A673 (cell line): ENCODE measurements at regions of chr7 and their contacts with region 1.

Region 1: GRCh38 chr7:116258734-116259133 is 48.4 kb downstream of the TES start:
- DNase-seq: peak; percentile 86
- H3K4me3 ChIP-seq: no peak overlapping the region
- H3K27ac ChIP-seq: peak overlapping the region; percentile 79
- H3K4me1 ChIP-seq: peaks cover 36% of the 10 kb centered on the region
- H3K27me3 ChIP-seq: no peaks in the 10 kb centered on the region
- CTCF ChIP-seq: peak; percentile 87

Region 2: DNA sequence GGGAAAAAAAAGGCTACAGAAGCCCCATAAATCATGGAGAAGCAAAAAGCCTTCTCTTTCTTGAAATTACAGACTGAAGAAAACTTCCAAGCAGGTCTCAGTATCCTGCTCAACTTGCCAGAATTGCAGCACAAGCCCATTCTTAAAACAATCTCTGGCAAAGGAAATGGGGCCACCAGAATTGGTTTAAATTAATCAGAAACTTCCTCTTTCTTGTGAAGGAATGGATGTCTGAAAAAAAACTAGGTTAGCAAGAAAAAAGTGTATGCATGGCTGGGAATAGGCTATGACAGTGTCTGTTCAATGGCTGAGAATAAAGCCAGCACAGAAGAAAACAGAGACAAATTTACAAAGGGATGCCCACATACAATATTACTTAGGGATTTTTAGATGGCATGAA is 287.2 kb before region 1 on chr7:
- CTCF ChIA-PET with region 1: no interaction called
- POLR2A ChIA-PET with region 1: no interaction called
- intact Hi-C with region 1: no loop called
- DNase-seq: no peak
- H3K4me3 ChIP-seq: no peak overlapping the region
- H3K27ac ChIP-seq: no peak overlapping the region
- H3K4me1 ChIP-seq: no peaks in the 10 kb centered on the region
- H3K27me3 ChIP-seq: no peaks in the 10 kb centered on the region
- CTCF ChIP-seq: no peak

Region 3: DNA sequence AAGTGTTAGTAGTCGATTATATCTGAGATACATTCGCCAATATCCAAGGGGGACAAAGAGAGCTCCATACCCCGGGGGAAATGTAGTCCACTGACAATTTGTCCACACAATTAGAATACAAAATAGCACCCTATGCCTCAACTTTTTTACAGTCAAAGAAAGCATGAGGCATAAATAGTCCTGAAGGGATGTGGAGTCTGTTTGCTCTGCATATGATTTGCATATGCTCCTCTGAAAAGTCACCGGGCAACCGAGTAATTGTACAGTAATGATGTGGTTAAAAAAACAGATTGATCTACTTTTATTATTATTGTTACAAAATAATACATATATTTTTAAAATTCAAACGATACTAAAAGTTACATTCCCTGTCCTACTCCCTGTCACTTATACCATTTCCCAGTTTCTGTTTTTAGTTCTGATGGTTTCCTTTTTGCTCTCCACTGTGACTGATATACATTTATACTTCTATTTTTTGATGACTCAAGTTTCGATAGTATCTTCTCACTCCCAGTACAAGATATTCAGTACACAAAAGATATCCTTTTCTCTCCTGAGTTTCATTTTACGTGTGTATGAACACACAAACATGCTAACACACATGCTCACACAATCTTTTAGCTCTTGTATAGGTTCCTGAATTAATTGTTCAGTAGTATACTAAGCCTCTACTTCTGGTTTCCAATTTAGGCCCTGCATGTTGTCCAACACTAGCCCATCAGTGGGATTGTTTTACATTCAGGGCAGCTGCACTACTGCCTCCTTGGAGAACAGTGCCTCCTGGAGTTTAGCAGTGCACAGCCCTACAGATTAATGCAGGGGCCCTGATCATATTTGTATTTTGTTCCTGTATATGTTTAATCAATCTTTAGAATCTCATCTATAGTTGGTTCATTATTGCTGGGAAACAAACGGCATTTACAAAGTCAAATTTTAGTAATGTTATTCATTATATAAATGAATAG is 82.5 kb after region 1 on chr7:
- CTCF ChIA-PET with region 1: no interaction called
- POLR2A ChIA-PET with region 1: no interaction called
- intact Hi-C with region 1: loop called (anchors 2 kb)
- DNase-seq: peak; percentile 78
- H3K4me3 ChIP-seq: peak overlapping the region; percentile 9
- H3K27ac ChIP-seq: peak overlapping the region; percentile 86
- H3K4me1 ChIP-seq: peaks cover 49% of the 10 kb centered on the region
- H3K27me3 ChIP-seq: no peaks in the 10 kb centered on the region
- CTCF ChIP-seq: peak; percentile 73

Region 4: DNA sequence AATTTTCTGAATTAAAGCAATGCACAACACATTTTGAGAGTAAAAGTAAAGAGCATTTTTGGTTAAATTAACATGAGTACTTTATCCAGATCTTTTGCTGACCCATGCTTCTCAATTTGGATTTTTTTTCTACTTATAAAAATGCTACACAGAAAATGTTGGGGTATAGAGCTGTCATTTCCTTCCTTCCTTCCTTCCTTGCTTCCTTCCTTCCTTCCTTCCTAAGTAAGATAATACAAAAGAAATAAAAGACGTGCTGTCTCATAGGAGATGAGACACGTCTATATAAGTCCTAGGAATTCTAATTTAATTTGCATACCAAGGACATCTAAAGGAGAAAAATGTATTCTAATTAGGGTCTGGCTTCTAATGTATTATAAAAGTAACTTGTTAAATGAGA is 209.8 kb after region 1 on chr7:
- CTCF ChIA-PET with region 1: no interaction called
- POLR2A ChIA-PET with region 1: no interaction called
- intact Hi-C with region 1: loop called (anchors 1 kb)
- DNase-seq: peak; percentile 96
- H3K4me3 ChIP-seq: no peak overlapping the region
- H3K27ac ChIP-seq: peak overlapping the region; percentile 99
- H3K4me1 ChIP-seq: peaks cover 83% of the 10 kb centered on the region
- H3K27me3 ChIP-seq: no peaks in the 10 kb centered on the region
- CTCF ChIP-seq: no peak

Region 5: GRCh38 chr7:116499168-116500077 is 240.7 kb after region 1 on chr7 and contains the start of gene CAV2:
- CTCF ChIA-PET with region 1: no interaction called
- POLR2A ChIA-PET with region 1: no interaction called
- intact Hi-C with region 1: loop called (anchors 2 kb)
- DNase-seq: peak; percentile 93
- H3K4me3 ChIP-seq: peak within 1 kb of the TSS; percentile 65
- H3K27ac ChIP-seq: peak within 1 kb of the TSS; percentile 98
- H3K4me1 ChIP-seq: peaks cover 26% of the 10 kb centered on the region
- H3K27me3 ChIP-seq: no peaks in the 10 kb centered on the region
- CTCF ChIP-seq: no peak
- total RNA-seq, gene CAV2: 265 and 286 TPM in 2 replicates